HCT116 (cell line): ENCODE measurements at regions of chr10 and their contacts with region 1.

Region 1: GRCh38 chr10:121168545-121169216 is 317.5 kb downstream of the WDR11 start:
- DNase-seq: peak; percentile 19
- ATAC-seq: peak; percentile 86
- H3K4me3 ChIP-seq: no peak overlapping the region
- H3K27ac ChIP-seq: no peak overlapping the region
- H3K4me1 ChIP-seq: peaks cover 2 to 6% of the 10 kb centered on the region in 2 experiments; a peak in 1 of 4 replicates
- H3K27me3 ChIP-seq: 0 out of 2 replicates have a peak, but pooled peaks cover 4% of the 10 kb centered on the region
- CTCF ChIP-seq: peak; percentile 13 to 48 (median 41); a peak in 4 of 6 replicates
- POLR2A ChIP-seq: no peak
- RAD21 ChIP-seq: peak; percentile 75

Region 2: GRCh38 chr10:120805014-120805812 is 363.5 kb before region 1 on chr10:
- CTCF ChIA-PET with region 1: no interaction called
- POLR2A ChIA-PET with region 1: no interaction called
- RAD21 ChIA-PET with region 1: no interaction called
- intact Hi-C with region 1: no loop called
- DNase-seq: peak; percentile 4
- ATAC-seq: peak; percentile 64
- H3K4me3 ChIP-seq: no peak overlapping the region
- H3K27ac ChIP-seq: no peak overlapping the region
- H3K4me1 ChIP-seq: no peaks in the 10 kb centered on the region
- H3K27me3 ChIP-seq: peaks cover 66% of the 10 kb centered on the region
- CTCF ChIP-seq: peak in 2 of 3 experiments; percentile 38 to 57; a peak in 4 of 6 replicates
- POLR2A ChIP-seq: no peak
- RAD21 ChIP-seq: no peak

Region 3: DNA sequence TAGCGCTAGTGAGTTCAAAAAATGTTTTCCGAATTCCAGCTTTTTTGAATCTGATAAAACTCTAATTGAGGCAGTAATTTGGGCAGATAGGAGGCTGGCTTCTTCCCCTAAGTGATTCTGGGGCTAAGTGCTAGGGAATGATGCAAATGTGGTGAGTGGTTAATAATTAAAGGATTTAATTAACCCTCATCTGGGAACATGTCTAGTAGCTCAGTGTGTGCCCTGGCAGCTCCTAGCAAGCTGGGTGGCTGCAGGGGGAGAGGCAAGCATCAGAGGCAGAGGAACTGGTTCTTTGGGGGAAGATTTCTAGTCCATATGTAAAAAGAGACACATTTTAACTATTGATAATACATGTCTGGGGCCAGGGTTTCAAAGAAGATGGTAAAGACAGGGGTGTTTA is 36.9 kb after region 1 on chr10:
- CTCF ChIA-PET with region 1: no interaction called
- POLR2A ChIA-PET with region 1: no interaction called
- RAD21 ChIA-PET with region 1: no interaction called
- intact Hi-C with region 1: no loop called
- DNase-seq: no peak
- ATAC-seq: no peak
- H3K4me3 ChIP-seq: no peak overlapping the region
- H3K27ac ChIP-seq: no peak overlapping the region
- H3K4me1 ChIP-seq: no peaks in the 10 kb centered on the region
- H3K27me3 ChIP-seq: peaks cover 9% of the 10 kb centered on the region; the same call in 1 of the 2 replicates
- CTCF ChIP-seq: no peak
- POLR2A ChIP-seq: no peak
- RAD21 ChIP-seq: no peak

Region 4: GRCh38 chr10:121608469-121609190 is 439.9 kb after region 1 on chr10:
- CTCF ChIA-PET with region 1: interaction called, 3 read pairs
- POLR2A ChIA-PET with region 1: no interaction called
- RAD21 ChIA-PET with region 1: no interaction called
- intact Hi-C with region 1: loop called (anchors 1 kb)
- DNase-seq: peak; percentile 43
- ATAC-seq: peak; percentile 95
- H3K4me3 ChIP-seq: peak overlapping the region; percentile 17 to 18
- H3K27ac ChIP-seq: no peak overlapping the region; the same call in 1 of the 2 replicates
- H3K4me1 ChIP-seq: peaks cover 7 to 17% of the 10 kb centered on the region in 2 experiments; a peak in 3 of 4 replicates
- H3K27me3 ChIP-seq: no peaks in the 10 kb centered on the region
- CTCF ChIP-seq: peak; percentile 90 to 98 (median 93)
- POLR2A ChIP-seq: no peak
- RAD21 ChIP-seq: peak; percentile 91

Region 5: DNA sequence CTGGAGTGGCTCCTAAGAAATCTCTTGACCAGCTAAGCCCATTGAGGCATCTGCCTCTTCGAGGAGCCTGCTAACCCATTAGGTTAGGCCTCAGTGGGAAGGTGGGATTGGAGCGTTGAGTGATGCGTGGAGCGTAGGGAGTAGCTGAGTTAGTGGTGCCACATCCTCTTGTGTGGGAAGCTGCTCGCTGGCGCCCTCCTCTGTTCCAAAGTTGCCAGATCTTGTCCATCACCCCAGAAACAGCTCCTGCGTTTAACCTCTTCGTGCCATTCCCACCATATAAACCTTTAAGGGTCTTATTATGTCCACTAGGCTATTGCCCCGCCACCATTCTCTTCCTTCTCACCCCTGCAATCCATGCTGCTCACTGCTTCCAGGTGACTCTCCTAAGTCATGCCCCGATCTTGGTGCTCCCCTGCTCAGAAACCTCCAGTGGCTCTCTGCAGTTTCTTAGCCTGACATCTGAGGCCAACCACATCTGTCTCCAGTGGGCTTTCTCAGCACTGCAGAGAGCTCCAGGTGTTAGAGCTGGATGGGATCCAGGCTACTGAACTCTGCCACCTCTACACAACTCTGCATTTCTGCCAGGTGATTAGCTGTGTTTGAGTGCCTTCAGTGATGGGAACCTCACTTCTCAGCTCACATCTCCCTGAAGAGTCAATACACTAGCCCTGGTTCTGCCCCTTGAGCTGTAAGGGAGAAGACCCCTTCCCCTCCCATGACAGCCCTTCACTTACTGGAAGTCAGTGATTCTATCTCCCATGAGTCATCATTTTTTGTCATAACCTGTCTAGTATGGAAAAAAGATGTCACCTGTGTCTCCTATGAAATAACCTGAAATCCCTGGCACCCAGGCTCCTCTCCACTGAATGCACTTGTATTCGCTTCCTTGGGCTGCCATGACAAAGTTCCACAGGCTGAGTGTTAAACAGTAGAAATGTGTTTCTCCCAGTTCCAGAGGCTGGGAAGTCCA is 494.6 kb after region 1 on chr10:
- CTCF ChIA-PET with region 1: interaction called, 6 read pairs
- POLR2A ChIA-PET with region 1: no interaction called
- RAD21 ChIA-PET with region 1: interaction called in 1 of 2 experiments, 3 read pairs
- intact Hi-C with region 1: loop called (anchors 5 kb)
- DNase-seq: peak; percentile 22
- ATAC-seq: peak; percentile 87
- H3K4me3 ChIP-seq: no peak overlapping the region
- H3K27ac ChIP-seq: no peak overlapping the region
- H3K4me1 ChIP-seq: peaks cover 0 to 5% of the 10 kb centered on the region in 2 experiments; a peak in 1 of 4 replicates
- H3K27me3 ChIP-seq: no peaks in the 10 kb centered on the region
- CTCF ChIP-seq: peak; percentile 47 to 78 (median 71); a peak in 5 of 6 replicates
- POLR2A ChIP-seq: no peak
- RAD21 ChIP-seq: peak; percentile 71

Region 6: DNA sequence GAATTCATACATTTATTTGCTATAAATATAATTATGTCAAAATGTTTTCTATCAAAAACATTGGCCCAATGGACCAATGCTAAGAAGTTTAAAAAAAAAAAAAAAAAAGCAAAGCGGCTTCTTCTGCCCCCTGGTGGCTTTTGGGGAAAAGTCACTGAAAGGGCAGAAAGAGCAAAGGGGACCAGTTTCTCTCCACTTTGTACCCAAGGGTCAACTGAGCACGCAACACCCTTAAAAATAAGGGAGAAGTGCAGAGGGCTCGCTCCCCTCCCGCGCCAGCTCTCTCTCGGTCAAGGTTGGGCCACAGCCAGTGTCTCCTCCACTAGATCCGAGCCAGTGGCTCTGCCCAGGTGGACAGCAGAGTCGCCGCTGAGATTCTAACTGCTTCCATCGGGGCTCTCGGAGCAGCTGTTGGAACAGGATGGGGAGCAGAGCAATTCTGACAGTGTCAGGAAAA is 565.9 kb after region 1 on chr10:
- CTCF ChIA-PET with region 1: no interaction called
- POLR2A ChIA-PET with region 1: no interaction called
- RAD21 ChIA-PET with region 1: no interaction called
- intact Hi-C with region 1: loop called (anchors 2 kb)
- DNase-seq: peak; percentile 19
- ATAC-seq: peak; percentile 64
- H3K4me3 ChIP-seq: no peak overlapping the region
- H3K27ac ChIP-seq: no peak overlapping the region
- H3K4me1 ChIP-seq: no peaks in the 10 kb centered on the region
- H3K27me3 ChIP-seq: no peaks in the 10 kb centered on the region
- CTCF ChIP-seq: peak; percentile 85 to 90 (median 89)
- POLR2A ChIP-seq: no peak
- RAD21 ChIP-seq: peak; percentile 78

Region 7: GRCh38 chr10:121900443-121901174 is 731.9 kb after region 1 on chr10:
- CTCF ChIA-PET with region 1: no interaction called
- POLR2A ChIA-PET with region 1: no interaction called
- RAD21 ChIA-PET with region 1: no interaction called
- intact Hi-C with region 1: loop called (anchors 10 kb)
- DNase-seq: peak; percentile 52
- ATAC-seq: peak; percentile 96
- H3K4me3 ChIP-seq: no peak overlapping the region
- H3K27ac ChIP-seq: no peak overlapping the region
- H3K4me1 ChIP-seq: no peaks in the 10 kb centered on the region
- H3K27me3 ChIP-seq: no peaks in the 10 kb centered on the region
- CTCF ChIP-seq: peak; percentile 70 to 97 (median 71); a peak in 5 of 6 replicates
- POLR2A ChIP-seq: no peak
- RAD21 ChIP-seq: peak; percentile 83